Activated CD4-positive, alpha-beta T cell treated with anti-CD3 and anti-CD28 coated beads, Interleukin-2, amount 10 ng/mL, durations not matched to agents 24 days and 14 days (primary cell): ENCODE measurements at regions of chr1 and their contacts with region 1.

Region 1: GRCh38 chr1:112390775-112391602 is 5.0 kb upstream of the CTTNBP2NL start:
- DNase-seq: peak; percentile 94
- H3K4me3 Mint-ChIP-seq: peak overlapping the region; percentile 80
- H3K27ac Mint-ChIP-seq: peak overlapping the region; percentile 62
- H3K4me1 Mint-ChIP-seq: peaks cover 37% of the 10 kb centered on the region
- H3K27me3 Mint-ChIP-seq: peaks cover 9% of the 10 kb centered on the region

Region 2: GRCh38 chr1:112466078-112466660 is 75.2 kb after region 1 on chr1:
- intact Hi-C with region 1: loop called (anchors 1 kb)
- DNase-seq: peak; percentile 96
- H3K4me3 Mint-ChIP-seq: peak overlapping the region; percentile 85
- H3K27ac Mint-ChIP-seq: peak overlapping the region; percentile 68
- H3K4me1 Mint-ChIP-seq: peaks cover 16% of the 10 kb centered on the region
- H3K27me3 Mint-ChIP-seq: peaks cover 30% of the 10 kb centered on the region

Region 3: GRCh38 chr1:112508278-112509004 is 117.5 kb after region 1 on chr1 and contains the start of gene WNT2B:
- intact Hi-C with region 1: loop called (anchors 5 kb)
- DNase-seq: peak; percentile 86
- H3K4me3 Mint-ChIP-seq: peak within 1 kb of the TSS; percentile 82
- H3K27ac Mint-ChIP-seq: no peak within 1 kb of the TSS
- H3K4me1 Mint-ChIP-seq: peaks cover 8% of the 10 kb centered on the region
- H3K27me3 Mint-ChIP-seq: peaks cover 57% of the 10 kb centered on the region
- total RNA-seq, gene WNT2B: 0.05 TPM in 1 of 2 replicates, not detected in the other

Region 4: GRCh38 chr1:112706908-112707663 is 316.1 kb after region 1 on chr1 and contains the start of gene RHOC:
- intact Hi-C with region 1: loop called (anchors 1 kb)
- DNase-seq: peak; percentile 91
- H3K4me3 Mint-ChIP-seq: peak within 1 kb of the TSS; percentile 87
- H3K27ac Mint-ChIP-seq: peak within 1 kb of the TSS; percentile 94
- H3K4me1 Mint-ChIP-seq: peaks cover 56% of the 10 kb centered on the region
- H3K27me3 Mint-ChIP-seq: peaks cover 21% of the 10 kb centered on the region
- total RNA-seq, gene RHOC: 48.5 and 53.4 TPM in 2 replicates

Region 5: GRCh38 chr1:112803906-112804762 is 413.1 kb after region 1 on chr1:
- intact Hi-C with region 1: loop called (anchors 10 kb)
- DNase-seq: peak; percentile 86
- H3K4me3 Mint-ChIP-seq: no peak overlapping the region
- H3K27ac Mint-ChIP-seq: no peak overlapping the region
- H3K4me1 Mint-ChIP-seq: peaks cover 2% of the 10 kb centered on the region
- H3K27me3 Mint-ChIP-seq: peaks cover 11% of the 10 kb centered on the region